Lower leg skin (tissue), 4 donors: ENCODE measurements at regions of chr7 and their contacts with region 1.

Region 1: DNA sequence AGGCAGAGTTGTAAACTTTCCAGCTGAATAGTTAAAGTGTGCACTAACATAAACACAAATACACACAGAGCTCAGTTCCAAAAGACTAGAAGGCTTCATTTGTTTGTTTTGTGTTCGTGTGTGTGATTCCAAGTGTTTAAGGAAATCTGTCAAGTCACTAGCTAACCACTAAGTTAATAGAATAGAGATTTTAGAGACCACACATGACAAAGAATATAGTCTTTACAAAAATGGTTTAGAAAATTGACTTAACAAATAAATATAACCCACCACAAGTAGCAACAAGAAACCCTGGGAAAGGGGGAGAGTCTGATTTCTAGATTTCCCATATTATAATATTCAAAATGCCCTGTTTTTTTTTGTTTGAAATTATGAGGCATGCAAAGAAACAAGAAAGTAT is 209.4 kb downstream of the FZD1 start:
- DNase-seq: no peak
- H3K4me3 ChIP-seq: no peak overlapping the region
- CTCF ChIP-seq: no peak
- POLR2A ChIP-seq: no peak

Region 2: GRCh38 chr7:91408388-91409154 is 65.0 kb before region 1 on chr7:
- intact Hi-C with region 1: no loop called
- DNase-seq: no peak
- H3K4me3 ChIP-seq: no peak overlapping the region
- CTCF ChIP-seq: no peak
- POLR2A ChIP-seq: no peak

Region 3: DNA sequence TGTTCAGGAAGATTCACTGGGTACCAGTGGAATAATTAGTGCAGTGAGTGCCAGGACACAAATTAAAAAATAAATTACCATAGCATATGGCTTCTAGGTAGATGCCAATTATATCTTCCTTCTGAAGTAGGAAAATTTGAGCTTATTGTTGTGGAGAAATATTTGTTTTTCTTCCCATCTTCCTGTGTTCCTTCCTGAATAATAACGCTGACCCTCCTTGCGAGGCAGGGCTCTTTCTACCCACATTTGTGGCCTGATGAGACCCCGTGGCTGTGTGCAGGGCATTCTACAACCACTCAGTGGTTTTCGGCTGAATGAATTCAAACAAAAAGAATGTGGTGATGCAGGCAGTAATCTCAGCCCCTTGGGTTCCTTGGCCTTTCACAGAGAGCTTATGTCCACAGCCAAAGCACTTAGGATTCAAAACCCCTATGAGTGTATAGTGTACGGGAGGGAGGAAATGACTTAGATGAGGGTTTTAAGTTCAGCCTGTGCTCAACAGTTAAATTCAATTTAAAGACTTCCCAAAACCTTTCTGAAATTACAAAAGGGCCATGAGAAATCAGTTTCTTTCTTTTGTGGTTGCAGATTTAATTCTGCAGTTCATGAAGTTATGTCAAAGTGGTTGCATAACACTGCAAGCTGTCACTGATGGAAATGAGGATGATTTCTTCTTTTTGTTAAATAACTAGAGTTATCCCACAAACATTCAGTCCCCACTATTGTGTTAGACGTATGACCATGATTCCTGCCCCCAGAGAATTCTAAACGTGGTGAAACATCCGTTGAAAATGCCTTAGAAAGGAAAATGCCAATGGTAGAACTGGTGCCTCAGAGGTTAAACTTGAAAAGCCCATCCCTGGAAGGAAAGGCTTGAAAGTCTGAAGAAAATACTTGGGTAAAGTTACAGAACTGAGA is 45.9 kb after region 1 on chr7:
- intact Hi-C with region 1: loop called (anchors 5 kb)
- DNase-seq: no peak
- H3K4me3 ChIP-seq: no peak overlapping the region
- CTCF ChIP-seq: no peak
- POLR2A ChIP-seq: no peak